Gastrocnemius medialis (tissue), 4 donors: ENCODE measurements at regions of chr2 and their contacts with region 1.

Region 1: DNA sequence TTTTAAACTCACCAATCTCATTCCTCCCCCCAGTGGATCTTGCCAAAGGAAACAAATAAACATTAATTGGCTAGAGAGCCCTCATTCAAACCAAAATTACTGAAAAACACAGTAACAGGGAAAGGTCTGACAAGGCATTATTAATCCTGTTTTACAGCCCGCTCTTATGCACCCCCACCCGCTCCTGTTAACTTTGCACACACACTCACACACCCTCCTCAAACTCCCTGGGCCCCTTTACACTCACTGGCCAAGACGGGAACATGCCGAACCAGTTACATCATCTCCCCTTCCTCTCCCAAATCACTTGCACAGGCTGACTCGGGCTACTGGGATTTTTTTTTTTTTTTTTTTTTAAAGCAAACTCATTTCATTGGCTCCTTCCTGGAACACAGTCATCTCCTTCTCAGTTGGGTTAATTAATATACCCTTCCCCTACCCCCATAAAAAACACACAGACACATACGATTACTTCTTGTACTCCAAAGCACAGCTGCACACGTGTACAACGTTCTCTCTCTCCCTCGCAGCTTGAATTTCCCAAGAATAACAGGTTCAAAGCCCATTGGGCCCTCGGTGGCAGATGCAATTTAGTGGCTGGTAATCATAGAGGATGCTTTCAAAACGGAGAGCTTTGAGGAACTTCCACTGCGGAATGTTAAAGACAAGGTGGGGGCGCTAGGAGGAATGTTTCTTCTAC is 31.8 kb downstream of the KLF7 start:
- DNase-seq: peak; percentile 75 to 76
- ATAC-seq: peak; percentile 87 to 94
- H3K4me3 ChIP-seq: no peak overlapping the region
- H3K27ac ChIP-seq: peak overlapping the region; percentile 79 to 86 (median 81)
- H3K4me1 ChIP-seq: peaks cover 71 to 73% of the 10 kb centered on the region in 2 donors
- H3K27me3 ChIP-seq: no peaks in the 10 kb centered on the region
- CTCF ChIP-seq: no peak
- POLR2A ChIP-seq: no peak

Region 2: DNA sequence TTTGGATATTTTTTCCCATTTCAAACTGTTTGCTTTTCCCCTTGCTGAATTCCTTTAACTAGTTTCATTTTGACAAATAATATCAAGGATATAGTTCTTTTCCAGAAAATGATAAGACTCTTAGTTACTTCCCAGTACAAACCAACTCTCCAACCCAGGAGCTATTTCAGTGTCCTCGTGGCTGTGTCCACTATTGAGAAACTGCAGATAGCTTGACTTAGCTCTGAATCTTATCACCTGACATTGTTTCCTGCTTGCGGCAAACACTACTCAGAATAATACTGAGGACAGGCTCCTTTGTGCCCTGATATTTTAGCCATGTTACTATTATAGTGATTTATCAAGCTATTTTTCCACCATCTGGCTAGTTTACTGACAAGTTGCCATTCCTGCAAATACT is 42.8 kb before region 1 on chr2:
- in situ Hi-C with region 1: no loop called
- intact Hi-C with region 1: loop called (anchors 5 kb)
- DNase-seq: no peak
- ATAC-seq: peak; percentile 55 to 61
- H3K4me3 ChIP-seq: no peak overlapping the region
- H3K27ac ChIP-seq: peak overlapping the region in 2 of 4 donors; percentile 15 to 18
- H3K4me1 ChIP-seq: peaks cover 15 to 45% of the 10 kb centered on the region in 2 donors
- H3K27me3 ChIP-seq: no peaks in the 10 kb centered on the region
- CTCF ChIP-seq: no peak
- POLR2A ChIP-seq: no peak